CD14-positive monocyte (primary cell): ENCODE measurements at regions of chrX and their contacts with region 1.

Region 1: DNA sequence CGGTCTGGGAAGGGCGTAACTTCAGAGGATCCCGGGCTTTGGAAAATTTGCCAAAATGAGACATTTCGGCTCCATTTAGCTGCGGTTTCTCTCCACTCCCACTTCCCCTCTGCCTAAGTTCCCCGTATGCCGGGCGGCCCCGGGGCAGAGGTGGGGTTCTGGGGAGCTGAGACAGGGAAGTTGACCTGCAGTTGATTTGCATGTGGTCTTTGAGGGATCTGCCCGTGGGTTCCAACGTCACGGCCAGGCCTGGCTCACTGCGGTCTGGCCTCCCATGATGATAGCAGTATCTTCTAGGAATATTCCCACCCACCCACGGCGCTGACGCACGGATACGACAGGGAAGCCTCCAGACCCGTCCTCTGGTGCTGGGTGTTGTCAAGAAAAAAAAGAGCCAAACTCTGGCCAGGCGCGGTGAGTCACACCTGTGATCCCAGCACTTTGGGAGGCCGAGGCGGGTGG is 27.3 kb upstream of the CRLF2 start:
- DNase-seq: peak; percentile 99 to 100 (median 99)
- H3K4me3 ChIP-seq: peak overlapping the region in 1 of 3 experiments; percentile 2
- H3K4me3 Mint-ChIP-seq: peak overlapping the region; percentile 42 to 54
- H3K27ac ChIP-seq: peak overlapping the region; percentile 59 to 74
- H3K27ac Mint-ChIP-seq: peak overlapping the region; percentile 81 to 96 (median 94)
- H3K4me1 ChIP-seq: peaks cover 22 to 25% of the 10 kb centered on the region in 2 donors
- H3K4me1 Mint-ChIP-seq: peaks cover 23% of the 10 kb centered on the region
- H3K27me3 ChIP-seq: peaks cover 0 to 2% of the 10 kb centered on the region in 2 donors
- H3K27me3 Mint-ChIP-seq: peaks cover 3 to 19% (median 10%) of the 10 kb centered on the region in 3 donors
- CTCF ChIP-seq: no peak

Region 2: DNA sequence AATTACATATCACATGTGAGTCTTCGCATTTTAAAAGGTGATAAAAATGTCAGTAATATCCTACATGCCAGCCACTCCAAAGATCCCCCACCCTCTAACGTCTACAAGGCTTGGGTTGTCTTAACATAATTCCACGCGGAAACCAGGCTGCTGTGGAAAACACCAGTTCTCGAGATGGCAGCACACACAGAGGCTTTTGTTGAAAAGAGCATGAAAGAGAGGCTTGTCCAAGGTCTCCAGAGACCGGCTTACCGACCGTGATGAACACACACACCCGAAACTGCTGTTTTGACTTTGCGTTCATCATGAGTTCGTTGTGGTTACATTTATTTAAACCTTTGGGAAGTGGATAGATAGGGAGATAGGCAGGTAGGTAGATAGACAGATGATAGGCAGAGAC is 115.2 kb before region 1 on chrX:
- intact Hi-C with region 1: no loop called
- DNase-seq: no peak
- H3K4me3 ChIP-seq: no peak overlapping the region
- H3K4me3 Mint-ChIP-seq: no peak overlapping the region
- H3K27ac ChIP-seq: no peak overlapping the region
- H3K27ac Mint-ChIP-seq: no peak overlapping the region
- H3K4me1 ChIP-seq: peaks cover 0 to 4% of the 10 kb centered on the region in 2 donors
- H3K4me1 Mint-ChIP-seq: peaks cover 9% of the 10 kb centered on the region
- H3K27me3 ChIP-seq: no peaks in the 10 kb centered on the region
- H3K27me3 Mint-ChIP-seq: peaks cover 3 to 16% (median 12%) of the 10 kb centered on the region in 3 donors
- CTCF ChIP-seq: no peak

Region 3: DNA sequence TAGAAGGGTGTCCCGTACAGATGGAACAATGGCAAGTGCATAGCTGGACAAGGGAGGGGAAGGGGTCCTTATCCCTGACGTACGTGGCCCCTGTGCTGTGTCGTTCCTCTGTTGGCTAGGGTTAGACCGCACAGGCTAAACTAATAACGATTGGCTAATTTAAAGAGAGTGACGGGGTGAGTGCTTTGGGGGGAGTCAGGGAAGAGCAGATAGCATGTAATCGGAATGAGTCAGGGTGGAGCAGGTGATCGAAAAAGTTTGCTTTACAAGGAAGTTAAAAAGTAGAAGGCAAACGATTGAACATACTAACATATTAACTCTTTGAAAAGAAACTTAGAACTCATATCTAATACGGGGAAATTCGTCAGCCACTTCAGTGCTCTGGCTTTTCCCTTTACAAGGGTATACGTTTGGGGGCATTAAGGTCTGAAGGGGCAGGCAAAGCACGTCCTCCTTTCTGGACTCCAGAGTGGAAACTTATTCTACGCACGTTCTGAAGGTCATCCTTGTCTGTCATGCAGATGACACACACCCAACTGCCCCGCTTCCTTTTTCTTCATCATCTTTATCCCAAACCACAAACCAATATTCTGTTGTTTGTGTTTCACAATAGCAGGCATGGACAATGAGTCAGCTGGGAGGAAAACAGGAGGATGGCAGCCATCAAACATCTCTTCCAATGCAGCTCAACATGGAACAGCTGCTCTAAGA is 17.0 kb before region 1 on chrX:
- intact Hi-C with region 1: loop called (anchors 1 to 2 kb)
- DNase-seq: peak; percentile 89 to 97 (median 91)
- H3K4me3 ChIP-seq: no peak overlapping the region
- H3K4me3 Mint-ChIP-seq: peak overlapping the region; percentile 38 to 57
- H3K27ac ChIP-seq: peak overlapping the region in 1 of 2 donors; percentile 76
- H3K27ac Mint-ChIP-seq: peak overlapping the region in 5 of 7 donors; percentile 85 to 96 (median 95)
- H3K4me1 ChIP-seq: peaks cover 17 to 23% of the 10 kb centered on the region in 2 donors
- H3K4me1 Mint-ChIP-seq: peaks cover 6% of the 10 kb centered on the region
- H3K27me3 ChIP-seq: peaks cover 0 to 4% of the 10 kb centered on the region in 2 donors
- H3K27me3 Mint-ChIP-seq: peaks cover 7 to 20% (median 8%) of the 10 kb centered on the region in 3 donors
- CTCF ChIP-seq: no peak

Region 4: GRCh38 chrX:1580735-1581531 is 341.2 kb after region 1 on chrX:
- intact Hi-C with region 1: no loop called
- DNase-seq: peak; percentile 71 to 77 (median 75)
- H3K4me3 ChIP-seq: no peak overlapping the region
- H3K4me3 Mint-ChIP-seq: no peak overlapping the region
- H3K27ac ChIP-seq: no peak overlapping the region
- H3K27ac Mint-ChIP-seq: no peak overlapping the region
- H3K4me1 ChIP-seq: no peaks in the 10 kb centered on the region
- H3K4me1 Mint-ChIP-seq: peaks cover 9% of the 10 kb centered on the region
- H3K27me3 ChIP-seq: no peaks in the 10 kb centered on the region
- H3K27me3 Mint-ChIP-seq: peaks cover 0 to 2% (median 0%) of the 10 kb centered on the region in 3 donors
- CTCF ChIP-seq: peak; percentile 98